ENCODE measurements at regions of chr5 and their contacts with region 1.

Region 1: DNA sequence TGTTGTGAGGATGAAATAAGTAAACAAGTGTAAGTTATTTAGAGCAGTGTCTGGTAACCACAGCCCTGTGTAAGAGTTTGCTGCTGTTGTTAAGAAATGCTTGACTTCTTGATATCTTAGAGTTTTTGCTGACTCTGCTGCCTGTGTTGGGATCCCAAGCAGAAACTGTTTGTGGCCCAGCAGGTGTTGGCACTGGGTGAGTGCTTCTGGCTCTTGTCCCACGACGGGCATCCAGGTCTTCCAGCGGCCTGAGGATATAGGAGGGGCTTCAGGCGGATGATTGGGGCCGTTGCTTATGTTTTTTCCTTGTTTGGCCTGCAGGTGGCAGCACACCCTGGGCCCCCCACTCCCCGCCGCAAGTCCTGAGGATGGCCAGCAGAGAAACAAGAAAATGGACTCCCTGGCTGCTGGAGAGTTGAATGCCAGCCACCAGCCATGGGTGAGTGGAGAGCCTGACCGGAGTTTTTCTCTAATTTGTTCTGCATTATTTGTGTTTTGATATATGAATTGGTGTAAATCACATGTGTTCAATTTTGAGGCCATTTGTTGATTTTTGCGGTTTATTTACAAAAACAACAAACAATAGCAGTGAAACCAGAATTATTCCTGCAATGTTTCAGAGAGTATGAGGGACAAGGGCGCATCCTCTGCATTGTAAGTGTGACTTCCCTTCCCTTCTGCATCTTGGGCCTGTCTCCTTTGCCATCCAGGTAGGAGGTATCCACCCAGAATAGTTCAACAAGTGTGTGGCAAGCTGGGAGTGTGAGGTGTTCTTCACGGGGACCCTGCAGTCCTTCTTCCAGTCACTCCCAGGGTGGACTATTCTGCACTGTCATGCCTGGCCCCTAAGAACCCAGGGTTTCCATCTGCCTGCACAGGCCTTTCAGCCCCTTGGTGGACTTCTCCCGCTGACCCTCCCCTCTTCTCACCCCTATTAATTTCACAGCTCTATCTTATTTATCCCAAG is 50.3 kb downstream of the SLC22A5 start:
- DNase-seq: peak; percentile 73
- ATAC-seq: peak; percentile 77
- H3K4me3 Mint-ChIP-seq: peak overlapping the region; percentile 49
- H3K27ac Mint-ChIP-seq: peak overlapping the region; percentile 84
- H3K4me1 Mint-ChIP-seq: peaks cover 88% of the 10 kb centered on the region
- H3K27me3 Mint-ChIP-seq: no peaks in the 10 kb centered on the region
- CTCF ChIP-seq: peak; percentile 93

Region 2: GRCh38 chr5:132238169-132238744 is 181.5 kb before region 1 on chr5:
- CTCF ChIA-PET with region 1: no interaction called
- POLR2A ChIA-PET with region 1: no interaction called
- intact Hi-C with region 1: no loop called
- DNase-seq: peak; percentile 94
- ATAC-seq: peak; percentile 98
- H3K4me3 Mint-ChIP-seq: no peak overlapping the region
- H3K27ac Mint-ChIP-seq: no peak overlapping the region
- H3K4me1 Mint-ChIP-seq: no peaks in the 10 kb centered on the region
- H3K27me3 Mint-ChIP-seq: no peaks in the 10 kb centered on the region
- CTCF ChIP-seq: peak; percentile 79

Region 3: GRCh38 chr5:132466433-132467286 is 46.9 kb after region 1 on chr5:
- CTCF ChIA-PET with region 1: interaction called, 45 read pairs
- POLR2A ChIA-PET with region 1: interaction called, 1,131 read pairs
- intact Hi-C with region 1: loop called (anchors 2 kb)
- DNase-seq: peak; percentile 89
- ATAC-seq: peak; percentile 69
- H3K4me3 Mint-ChIP-seq: peak overlapping the region; percentile 66
- H3K27ac Mint-ChIP-seq: peak overlapping the region; percentile 88
- H3K4me1 Mint-ChIP-seq: peaks cover 87% of the 10 kb centered on the region
- H3K27me3 Mint-ChIP-seq: no peaks in the 10 kb centered on the region
- CTCF ChIP-seq: no peak

Region 4: DNA sequence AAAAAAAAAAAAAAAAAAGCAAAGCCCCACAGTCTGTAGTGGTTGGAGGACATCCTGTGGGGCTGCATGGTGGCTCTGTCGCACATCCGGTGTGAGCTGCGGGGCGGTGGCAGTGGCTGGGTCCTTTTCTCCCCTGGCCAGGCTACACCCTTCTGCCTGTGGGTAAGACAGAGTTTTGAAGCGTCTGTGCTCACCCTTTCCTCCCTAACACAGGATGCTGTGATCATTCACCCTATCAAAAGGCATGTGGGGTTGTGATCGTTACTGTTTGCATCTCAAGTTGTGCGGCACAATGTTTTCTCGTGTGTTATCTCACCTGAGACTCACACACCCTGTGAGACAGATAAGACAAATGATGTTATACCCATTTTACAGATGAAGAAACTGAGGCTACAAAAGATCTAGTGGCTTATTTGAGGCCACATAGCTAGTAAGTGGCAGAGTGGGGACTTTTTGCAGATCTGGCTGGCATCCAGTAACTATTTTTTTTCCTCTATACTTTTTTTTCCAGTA is 53.3 kb after region 1 on chr5:
- CTCF ChIA-PET with region 1: interaction called, 48 read pairs
- POLR2A ChIA-PET with region 1: interaction called, 1,131 read pairs
- intact Hi-C with region 1: no loop called
- DNase-seq: peak; percentile 91
- ATAC-seq: peak; percentile 94
- H3K4me3 Mint-ChIP-seq: no peak overlapping the region
- H3K27ac Mint-ChIP-seq: peak overlapping the region; percentile 78
- H3K4me1 Mint-ChIP-seq: peaks cover 72% of the 10 kb centered on the region
- H3K27me3 Mint-ChIP-seq: no peaks in the 10 kb centered on the region
- CTCF ChIP-seq: no peak

Region 5: GRCh38 chr5:132479111-132479951 is 59.5 kb after region 1 on chr5:
- CTCF ChIA-PET with region 1: interaction called, 48 read pairs
- POLR2A ChIA-PET with region 1: interaction called, 1,131 read pairs
- intact Hi-C with region 1: no loop called
- DNase-seq: peak; percentile 9
- ATAC-seq: peak; percentile 5
- H3K4me3 Mint-ChIP-seq: no peak overlapping the region
- H3K27ac Mint-ChIP-seq: peak overlapping the region; percentile 35
- H3K4me1 Mint-ChIP-seq: peaks cover 73% of the 10 kb centered on the region
- H3K27me3 Mint-ChIP-seq: no peaks in the 10 kb centered on the region
- CTCF ChIP-seq: no peak

Region 6: DNA sequence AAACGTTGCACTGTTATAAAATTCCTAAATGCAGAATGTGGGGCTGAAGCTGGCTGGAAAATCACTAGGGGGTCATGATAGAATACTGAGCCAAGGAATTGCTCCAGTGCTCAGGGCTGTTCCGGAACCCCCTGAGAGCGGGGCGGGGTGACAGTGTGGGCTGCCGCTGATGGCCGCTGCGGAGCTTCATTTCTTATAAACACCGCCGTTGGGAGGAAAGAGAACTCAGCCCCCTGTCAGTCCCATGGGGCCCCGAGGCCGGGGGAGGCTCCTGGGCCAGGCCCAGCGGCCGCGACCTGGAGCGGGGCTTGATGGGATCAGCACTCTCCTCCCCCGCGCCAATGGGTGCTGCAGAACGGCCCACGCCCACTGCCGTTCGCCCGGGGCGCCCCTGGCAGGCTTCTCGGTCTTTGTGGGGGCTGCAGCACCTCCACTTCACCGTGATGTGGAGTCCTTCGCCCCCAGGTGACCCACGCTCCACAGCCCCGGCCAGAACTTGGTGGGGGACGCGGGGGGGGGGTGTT is 75.9 kb after region 1 on chr5:
- CTCF ChIA-PET with region 1: interaction called, 67 read pairs
- POLR2A ChIA-PET with region 1: interaction called, 1,131 read pairs
- intact Hi-C with region 1: no loop called
- DNase-seq: peak; percentile 94
- ATAC-seq: peak; percentile 60
- H3K4me3 Mint-ChIP-seq: peak overlapping the region; percentile 90
- H3K27ac Mint-ChIP-seq: peak overlapping the region; percentile 99
- H3K4me1 Mint-ChIP-seq: peaks cover 67% of the 10 kb centered on the region
- H3K27me3 Mint-ChIP-seq: no peaks in the 10 kb centered on the region
- CTCF ChIP-seq: no peak

Measured in activated CD8-positive, alpha-beta T cell treated with anti-CD3 and anti-CD28 coated beads for 36 hours (primary cell).